Sciatic nerve (tissue), 2 donors: ENCODE measurements at regions of chr7 and their contacts with region 1.

Region 1: GRCh38 chr7:140059273-140060242 is 3.2 kb downstream of the PARP12 start:
- DNase-seq: no peak
- ATAC-seq: no peak

Region 2: GRCh38 chr7:140074820-140075219 is 15.3 kb after region 1 on chr7:
- intact Hi-C with region 1: loop called (anchors 1 kb)
- DNase-seq: no peak
- ATAC-seq: peak; percentile 67